Kidney (tissue), 22 donors: ENCODE measurements at regions of chr3 and their contacts with region 1.

Region 1: DNA sequence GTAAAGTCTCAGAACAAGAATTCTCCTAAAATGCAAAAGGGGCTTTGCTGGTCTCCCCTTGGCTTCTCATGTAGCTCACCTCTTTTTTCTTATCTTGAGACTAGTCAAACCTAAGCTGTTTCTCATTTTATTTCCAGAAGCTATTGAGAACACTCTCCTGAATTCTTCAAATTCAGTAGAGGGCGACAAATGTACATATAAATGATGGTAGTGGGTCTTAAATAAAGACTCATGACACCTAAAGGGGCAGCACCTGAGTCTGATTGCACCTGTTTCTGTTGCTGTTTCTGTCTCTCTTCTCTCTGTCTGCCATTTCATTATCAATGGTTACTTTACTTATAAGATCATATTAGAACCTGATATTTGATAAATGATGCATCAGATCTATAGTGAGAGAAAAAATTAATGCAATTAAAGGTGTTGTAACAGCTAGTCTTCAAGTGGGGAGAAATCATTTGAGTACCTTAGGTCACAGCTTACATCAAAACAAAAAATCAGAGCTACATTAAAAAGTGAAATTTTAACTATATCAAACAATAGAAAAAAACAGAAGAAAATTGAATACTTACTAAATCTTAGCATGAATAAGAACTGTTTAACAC is 7.0 kb downstream of the ADIPOQ start:
- DNase-seq: peak in 2 of 5 donors; percentile 70 to 72
- H3K4me3 ChIP-seq: no peak overlapping the region
- H3K27ac ChIP-seq: no peak overlapping the region
- H3K4me1 ChIP-seq: no peaks in the 10 kb centered on the region
- H3K27me3 ChIP-seq: no peaks in the 10 kb centered on the region
- CTCF ChIP-seq: peak; percentile 58

Region 2: GRCh38 chr3:186772701-186773424 is 76.6 kb before region 1 on chr3:
- intact Hi-C with region 1: no loop called
- DNase-seq: peak; percentile 62 to 92 (median 69)
- H3K4me3 ChIP-seq: peak overlapping the region; percentile 66 to 86 (median 69)
- H3K27ac ChIP-seq: no peak overlapping the region
- H3K4me1 ChIP-seq: no peaks in the 10 kb centered on the region
- H3K27me3 ChIP-seq: no peaks in the 10 kb centered on the region
- CTCF ChIP-seq: no peak

Region 3: DNA sequence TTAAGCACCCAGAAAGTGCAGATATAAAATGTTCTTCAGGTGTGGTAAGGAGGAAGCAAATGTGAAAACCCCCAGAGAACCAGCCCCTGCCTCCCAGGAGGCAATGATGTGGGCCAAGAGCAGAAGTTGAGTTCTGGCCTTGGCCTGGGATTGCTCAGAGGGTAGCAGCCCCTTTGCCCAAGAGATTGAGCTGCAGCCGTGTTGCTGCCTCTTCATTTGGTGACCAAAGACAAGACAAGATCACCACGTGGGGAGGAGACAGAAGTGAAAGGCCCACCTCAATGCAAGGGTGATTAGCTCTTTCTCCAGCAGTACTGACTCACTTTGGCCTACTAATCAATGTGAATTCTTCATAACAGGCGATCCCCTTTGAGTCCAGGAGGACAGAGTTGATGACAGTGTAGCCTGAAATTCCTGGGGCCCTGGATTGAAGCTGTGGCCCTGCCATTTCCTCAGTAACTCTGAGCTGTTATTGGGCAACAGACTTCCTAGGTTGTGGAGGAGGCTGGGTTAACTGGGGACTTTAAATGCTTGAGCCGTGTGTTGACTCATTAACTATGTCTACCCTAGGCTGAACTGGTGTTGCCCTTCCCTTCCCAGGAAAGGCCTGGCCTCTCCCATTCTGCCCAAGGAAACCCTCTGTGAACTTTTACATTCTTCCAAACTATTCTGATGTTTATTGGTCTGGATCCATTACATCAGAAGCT is 167.3 kb after region 1 on chr3:
- intact Hi-C with region 1: no loop called
- DNase-seq: peak in 1 of 5 donors; percentile 44
- H3K4me3 ChIP-seq: no peak overlapping the region
- H3K27ac ChIP-seq: peak overlapping the region; percentile 51 to 62
- H3K4me1 ChIP-seq: peaks cover 3 to 21% (median 14%) of the 10 kb centered on the region in 3 donors
- H3K27me3 ChIP-seq: no peaks in the 10 kb centered on the region
- CTCF ChIP-seq: no peak

Region 4: GRCh38 chr3:187112934-187113793 is 263.7 kb after region 1 on chr3:
- intact Hi-C with region 1: no loop called
- DNase-seq: peak in 2 of 5 donors; percentile 17 to 39
- H3K4me3 ChIP-seq: no peak overlapping the region
- H3K27ac ChIP-seq: no peak overlapping the region
- H3K4me1 ChIP-seq: no peaks in the 10 kb centered on the region
- H3K27me3 ChIP-seq: no peaks in the 10 kb centered on the region
- CTCF ChIP-seq: peak; percentile 45

Region 5: DNA sequence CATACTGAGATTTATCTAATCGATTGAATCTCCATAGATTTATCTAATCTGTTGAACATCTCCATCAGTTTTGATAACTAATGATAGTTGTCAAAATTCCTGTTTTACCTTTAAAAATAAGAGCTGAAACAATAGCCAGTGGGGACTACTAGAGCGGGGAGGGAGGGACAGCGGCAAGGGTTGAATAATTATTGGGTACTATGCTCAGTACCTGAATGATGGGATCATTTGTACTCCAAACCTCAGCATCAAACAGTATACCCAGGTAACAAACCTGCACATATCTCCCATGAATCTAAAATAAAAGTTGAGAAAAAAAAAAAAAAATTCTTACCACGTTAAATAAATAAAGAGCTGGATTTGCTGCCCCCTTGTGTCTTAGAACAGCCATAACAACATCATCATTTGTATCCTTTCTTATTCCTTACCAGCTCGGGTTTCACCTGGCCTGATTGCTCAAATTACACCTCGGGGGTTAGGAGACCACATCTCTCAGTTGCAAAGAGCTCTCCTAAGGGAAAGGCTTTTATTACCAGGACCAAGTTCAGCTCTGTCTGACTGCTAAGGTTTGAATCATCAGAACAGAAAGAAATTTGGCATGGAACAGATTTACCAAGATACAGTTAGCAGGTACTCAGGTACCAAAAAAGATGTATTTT is 315.5 kb after region 1 on chr3:
- intact Hi-C with region 1: loop called (anchors 10 kb)
- DNase-seq: peak in 4 of 5 donors; percentile 60 to 94 (median 84)
- H3K4me3 ChIP-seq: no peak overlapping the region
- H3K27ac ChIP-seq: no peak overlapping the region
- H3K4me1 ChIP-seq: peaks cover 0 to 6% (median 0%) of the 10 kb centered on the region in 3 donors
- H3K27me3 ChIP-seq: no peaks in the 10 kb centered on the region
- CTCF ChIP-seq: peak; percentile 69